Right lobe of liver (tissue), 6 donors: ENCODE measurements at regions of chr14 and their contacts with region 1.

Region 1: GRCh38 chr14:100640471-100641273 is 53.5 kb upstream of the BEGAIN start:
- DNase-seq: no peak
- ATAC-seq: peak in 2 of 4 donors; percentile 33 to 34
- H3K4me3 ChIP-seq: no peak overlapping the region
- H3K27ac ChIP-seq: peak overlapping the region in 1 of 3 donors; percentile 37
- H3K4me1 ChIP-seq: peaks cover 0 to 22% (median 6%) of the 10 kb centered on the region in 4 donors
- H3K27me3 ChIP-seq: no peaks in the 10 kb centered on the region
- CTCF ChIP-seq: no peak
- POLR2A ChIP-seq: no peak

Region 2: DNA sequence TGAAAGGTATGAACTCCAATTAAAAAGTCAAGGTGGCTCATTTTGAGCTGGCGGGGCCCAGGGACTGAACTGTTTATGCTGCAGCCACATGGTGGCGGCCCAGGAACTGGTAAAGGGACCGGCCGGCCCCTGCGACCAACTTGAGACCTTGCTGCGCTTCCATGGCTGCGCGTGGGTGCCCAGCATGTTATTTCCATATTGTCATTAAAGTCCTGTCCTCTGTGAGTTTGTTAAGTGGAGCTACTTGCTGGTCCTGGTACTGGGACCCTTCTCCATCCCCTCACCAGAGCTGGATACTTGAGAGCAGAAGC is 115.8 kb before region 1 on chr14:
- intact Hi-C with region 1: loop called in 1 of 2 experiments (anchors 5 kb)
- DNase-seq: peak in 1 of 3 donors; percentile 31
- ATAC-seq: peak in 2 of 4 donors; percentile 42 to 44
- H3K4me3 ChIP-seq: no peak overlapping the region
- H3K27ac ChIP-seq: no peak overlapping the region
- H3K4me1 ChIP-seq: no peaks in the 10 kb centered on the region
- H3K27me3 ChIP-seq: no peaks in the 10 kb centered on the region
- CTCF ChIP-seq: peak; percentile 32 to 55 (median 42)
- POLR2A ChIP-seq: no peak